ENCODE measurements at regions of chr11 and their contacts with region 1.

Region 1: GRCh38 chr11:76919887-76920746 is 59.4 kb downstream of the ACER3 start:
- H3K4me3 ChIP-seq: no peak overlapping the region
- H3K27ac ChIP-seq: no peak overlapping the region
- H3K4me1 ChIP-seq: no peaks in the 10 kb centered on the region
- CTCF ChIP-seq: peak; percentile 70

Region 2: GRCh38 chr11:76768088-76768908 is 151.8 kb before region 1 on chr11:
- CTCF ChIA-PET with region 1: no interaction called
- POLR2A ChIA-PET with region 1: no interaction called
- H3K4me3 ChIP-seq: no peak overlapping the region
- H3K27ac ChIP-seq: no peak overlapping the region
- H3K4me1 ChIP-seq: no peaks in the 10 kb centered on the region
- CTCF ChIP-seq: no peak

Region 3: DNA sequence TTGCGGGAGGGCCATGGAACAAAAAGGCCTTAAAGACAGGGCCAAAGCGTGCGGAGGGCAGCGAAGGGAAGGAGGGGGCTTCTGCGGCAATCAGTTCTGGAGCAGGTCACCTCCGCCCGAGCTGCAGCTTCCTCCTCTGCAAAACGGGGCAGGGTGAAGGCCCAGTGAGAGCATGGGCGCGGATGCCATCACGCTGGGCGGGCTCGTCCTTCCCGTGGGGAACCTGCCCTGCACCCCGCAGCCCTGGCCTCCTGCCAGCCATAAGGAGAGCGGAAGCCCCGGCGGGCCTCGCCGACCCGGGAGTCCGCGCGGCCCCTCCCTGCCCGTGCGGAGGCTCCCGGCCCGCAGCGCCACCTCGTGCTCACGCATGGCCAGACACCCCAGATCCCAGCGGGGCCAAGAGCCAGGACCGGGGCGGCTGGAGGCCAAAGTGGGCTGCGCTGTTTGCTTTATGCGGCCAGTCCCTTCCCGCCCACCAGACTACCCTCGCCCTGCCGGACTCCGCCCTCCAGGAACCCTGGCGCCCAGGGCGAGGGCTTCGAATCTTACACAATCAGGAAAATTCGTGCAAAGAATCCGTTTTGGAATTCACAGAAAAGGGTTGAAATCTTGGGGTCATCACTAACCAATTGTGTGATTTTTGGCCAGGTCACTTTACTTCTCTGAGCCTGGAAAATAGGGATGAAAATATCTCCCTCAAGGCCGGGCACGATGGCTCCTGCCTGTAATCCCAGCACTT is 120.9 kb before region 1 on chr11:
- CTCF ChIA-PET with region 1: interaction called, 50 read pairs
- POLR2A ChIA-PET with region 1: no interaction called
- H3K4me3 ChIP-seq: peak overlapping the region; percentile 5; the same call in 1 of the 2 replicates
- H3K27ac ChIP-seq: no peak overlapping the region
- H3K4me1 ChIP-seq: 0 out of 2 replicates have a peak, but pooled peaks cover 2% of the 10 kb centered on the region
- CTCF ChIP-seq: peak; percentile 73

Region 4: GRCh38 chr11:76856106-76856505 is 64.0 kb before region 1 on chr11:
- CTCF ChIA-PET with region 1: interaction called, 19 read pairs
- POLR2A ChIA-PET with region 1: no interaction called
- H3K4me3 ChIP-seq: no peak overlapping the region
- H3K27ac ChIP-seq: no peak overlapping the region
- H3K4me1 ChIP-seq: no peaks in the 10 kb centered on the region
- CTCF ChIP-seq: no peak

Region 5: DNA sequence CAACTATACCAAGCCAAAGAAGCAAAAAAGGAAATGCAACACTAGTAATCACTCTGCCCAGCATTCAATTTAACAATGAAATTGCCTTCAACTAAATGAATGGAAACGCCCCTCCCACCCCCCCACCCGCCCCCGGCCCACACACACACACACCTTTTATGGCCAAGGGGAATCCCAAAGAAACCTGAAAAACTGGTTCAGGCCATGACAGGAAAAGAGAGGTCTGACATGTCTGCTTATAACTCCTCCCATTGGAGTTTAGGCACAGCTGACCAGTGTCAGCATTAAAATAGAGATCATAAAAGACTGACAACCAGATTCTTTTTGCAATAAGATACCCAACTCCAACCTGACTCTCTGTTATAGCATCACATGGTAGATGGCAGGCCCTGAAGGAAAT is 16.8 kb before region 1 on chr11:
- CTCF ChIA-PET with region 1: interaction called, 33 read pairs
- POLR2A ChIA-PET with region 1: no interaction called
- H3K4me3 ChIP-seq: no peak overlapping the region
- H3K27ac ChIP-seq: no peak overlapping the region
- H3K4me1 ChIP-seq: no peaks in the 10 kb centered on the region
- CTCF ChIP-seq: no peak

Region 6: GRCh38 chr11:77039491-77040400 is 119.6 kb after region 1 on chr11:
- CTCF ChIA-PET with region 1: interaction called, 45 read pairs
- POLR2A ChIA-PET with region 1: no interaction called
- H3K4me3 ChIP-seq: no peak overlapping the region
- H3K27ac ChIP-seq: no peak overlapping the region
- H3K4me1 ChIP-seq: peaks cover 9% of the 10 kb centered on the region; the same call in 1 of the 2 replicates
- CTCF ChIP-seq: no peak